ENCODE measurements at regions of chr7 and their contacts with region 1.

Region 1: DNA sequence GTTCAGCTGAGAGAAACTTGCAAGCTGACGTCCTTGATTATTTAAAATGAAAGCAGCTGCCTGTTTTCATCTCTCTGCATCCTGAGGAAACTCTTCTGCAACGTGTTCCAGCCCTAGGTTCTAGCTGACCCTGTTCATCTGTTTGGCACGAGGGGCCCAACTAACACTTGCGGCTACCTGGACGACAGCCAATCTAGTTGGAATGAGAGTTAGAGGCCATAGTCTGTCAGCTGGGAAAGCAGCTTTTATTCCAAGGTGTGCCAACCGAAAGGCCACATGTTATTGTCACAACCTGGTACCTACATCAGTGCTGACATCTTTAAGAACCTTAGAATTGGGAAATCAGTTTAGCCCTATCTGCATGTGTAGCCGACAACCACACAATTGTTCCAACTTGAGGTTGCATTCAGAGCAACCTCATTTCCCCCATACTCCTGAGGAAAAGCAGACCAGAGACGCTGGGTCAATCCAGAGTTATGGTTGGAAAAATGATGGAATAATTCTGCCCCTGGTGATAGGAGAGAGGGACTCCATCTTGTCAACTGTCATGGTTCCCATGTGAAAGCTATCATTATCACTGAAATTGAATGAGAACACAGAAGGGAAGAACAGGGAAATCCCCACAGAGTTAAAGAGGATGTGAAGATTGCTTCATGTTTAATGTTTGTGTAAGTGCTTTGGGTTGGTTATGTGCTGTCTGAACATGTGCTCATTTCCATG is 121.6 kb downstream of the EGFR start:
- DNase-seq: peak in 3 of 7 donors; percentile 37 to 52 (median 39)
- H3K4me3 ChIP-seq: no peak overlapping the region
- H3K27ac ChIP-seq: no peak overlapping the region
- H3K4me1 ChIP-seq: peaks cover 0 to 4% of the 10 kb centered on the region in 2 donors
- H3K27me3 ChIP-seq: no peaks in the 10 kb centered on the region
- CTCF ChIP-seq: no peak
- POLR2A ChIP-seq: no peak

Region 2: DNA sequence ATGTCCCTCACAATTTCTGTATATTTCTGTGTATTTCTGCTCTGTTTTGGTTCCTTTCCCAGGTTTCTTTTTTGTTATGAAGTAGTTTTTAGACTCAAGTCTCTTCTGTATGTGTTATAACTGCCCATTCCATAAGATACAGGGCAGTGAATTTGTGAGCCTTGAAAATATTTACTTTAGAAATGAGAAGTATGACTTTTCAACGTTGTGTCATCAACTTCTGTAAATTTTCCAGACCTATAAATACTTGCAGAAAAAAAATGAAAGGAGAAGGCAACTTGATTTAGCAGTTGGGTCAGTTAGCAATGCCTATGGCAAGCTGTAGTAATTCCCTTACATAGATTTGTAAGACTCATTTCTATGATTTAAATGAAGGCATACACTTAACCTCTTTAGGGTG is 110.1 kb before region 1 on chr7:
- intact Hi-C with region 1: loop called in 1 of 2 experiments (anchors 10 kb)
- DNase-seq: no peak
- H3K4me3 ChIP-seq: no peak overlapping the region
- H3K27ac ChIP-seq: no peak overlapping the region
- H3K4me1 ChIP-seq: peaks cover 4 to 33% of the 10 kb centered on the region in 2 donors
- H3K27me3 ChIP-seq: no peaks in the 10 kb centered on the region
- CTCF ChIP-seq: no peak
- POLR2A ChIP-seq: no peak